CD4-positive, alpha-beta memory T cell (primary cell): ENCODE measurements at regions of chr3 and their contacts with region 1.

Region 1: GRCh38 chr3:11846281-11847034 is at the start of gene TAMM41:
- DNase-seq: peak; percentile 85 to 90 (median 87)
- H3K4me3 ChIP-seq: peak within 1 kb of the TSS; percentile 79 to 92
- H3K4me3 Mint-ChIP-seq: peak within 1 kb of the TSS; percentile 96 to 99 (median 98)
- H3K27ac ChIP-seq: peak within 1 kb of the TSS; percentile 88
- H3K27ac Mint-ChIP-seq: peak within 1 kb of the TSS; percentile 87 to 99 (median 98)
- H3K4me1 ChIP-seq: peaks cover 30% of the 10 kb centered on the region
- H3K4me1 Mint-ChIP-seq: peaks cover 31 to 56% (median 40%) of the 10 kb centered on the region in 4 donors
- H3K27me3 ChIP-seq: no peaks in the 10 kb centered on the region
- H3K27me3 Mint-ChIP-seq: no peaks in the 10 kb centered on the region
- total RNA-seq, gene TAMM41: 47.0 to 52.2 TPM

Region 2: DNA sequence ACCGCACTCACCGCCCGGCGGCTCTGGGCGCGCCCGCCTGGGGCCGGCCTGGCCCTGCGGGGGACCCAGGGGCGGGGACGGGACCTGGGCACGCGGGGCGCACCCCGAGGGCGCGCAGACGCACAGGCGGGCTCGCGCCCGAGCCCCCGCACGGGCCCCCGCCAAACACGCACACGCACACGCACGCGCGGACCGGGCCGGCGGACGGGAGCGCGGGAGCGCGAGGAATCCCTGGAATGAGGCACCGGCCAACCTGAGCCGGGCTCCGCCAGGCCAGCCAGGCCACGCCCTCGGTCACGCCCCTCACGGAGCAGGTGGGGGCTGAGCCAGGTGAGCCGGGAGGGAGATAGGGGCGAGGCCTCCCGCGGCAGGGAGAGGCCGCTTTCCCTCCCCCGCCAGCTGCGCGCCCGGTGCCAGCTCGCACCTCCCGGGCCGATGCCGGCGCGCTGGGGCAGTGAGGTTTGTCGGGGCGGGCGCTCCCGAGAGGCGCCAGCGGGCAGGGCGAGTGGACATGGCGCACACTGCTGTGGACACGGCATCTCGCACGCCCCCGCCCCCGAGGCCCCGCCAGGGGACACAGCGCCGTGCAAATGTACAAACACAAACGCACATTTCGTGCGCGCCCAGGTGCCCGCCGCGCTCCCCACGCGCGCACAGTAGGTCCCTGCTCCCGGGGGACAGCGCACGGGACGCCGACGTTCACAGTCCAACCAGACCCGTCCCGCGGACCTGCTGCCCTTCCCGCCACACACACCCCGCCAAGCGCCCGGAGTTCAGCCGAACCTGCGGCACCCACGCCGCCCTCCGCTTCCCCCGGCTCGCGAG is 126.8 kb before region 1 on chr3:
- CTCF ChIA-PET with region 1: no interaction called
- POLR2A ChIA-PET with region 1: interaction called, 3 read pairs
- intact Hi-C with region 1: loop called (anchors 1 kb)
- DNase-seq: peak; percentile 76 to 87 (median 78)
- H3K4me3 ChIP-seq: peak overlapping the region in 1 of 2 donors; percentile 59
- H3K4me3 Mint-ChIP-seq: peak overlapping the region; percentile 64 to 97 (median 84)
- H3K27ac ChIP-seq: peak overlapping the region; percentile 64
- H3K27ac Mint-ChIP-seq: peak overlapping the region in 2 of 7 donors; percentile 59 to 70
- H3K4me1 ChIP-seq: peaks cover 14% of the 10 kb centered on the region
- H3K4me1 Mint-ChIP-seq: peaks cover 10 to 32% (median 23%) of the 10 kb centered on the region in 4 donors
- H3K27me3 ChIP-seq: no peaks in the 10 kb centered on the region
- H3K27me3 Mint-ChIP-seq: peaks cover 0 to 4% of the 10 kb centered on the region in 2 donors

Region 3: GRCh38 chr3:11791339-11792128 is 54.9 kb before region 1 on chr3:
- CTCF ChIA-PET with region 1: no interaction called
- POLR2A ChIA-PET with region 1: no interaction called
- intact Hi-C with region 1: no loop called
- DNase-seq: no peak
- H3K4me3 ChIP-seq: no peak overlapping the region
- H3K4me3 Mint-ChIP-seq: peak overlapping the region in 1 of 8 donors; percentile 33
- H3K27ac ChIP-seq: no peak overlapping the region
- H3K27ac Mint-ChIP-seq: peak overlapping the region in 2 of 7 donors; percentile 22 to 57
- H3K4me1 ChIP-seq: no peaks in the 10 kb centered on the region
- H3K4me1 Mint-ChIP-seq: peaks cover 0 to 8% (median under 1%) of the 10 kb centered on the region in 4 donors
- H3K27me3 ChIP-seq: no peaks in the 10 kb centered on the region
- H3K27me3 Mint-ChIP-seq: no peaks in the 10 kb centered on the region